T-cell (primary cell): ENCODE measurements at regions of chr6 and their contacts with region 1.

Region 1: DNA sequence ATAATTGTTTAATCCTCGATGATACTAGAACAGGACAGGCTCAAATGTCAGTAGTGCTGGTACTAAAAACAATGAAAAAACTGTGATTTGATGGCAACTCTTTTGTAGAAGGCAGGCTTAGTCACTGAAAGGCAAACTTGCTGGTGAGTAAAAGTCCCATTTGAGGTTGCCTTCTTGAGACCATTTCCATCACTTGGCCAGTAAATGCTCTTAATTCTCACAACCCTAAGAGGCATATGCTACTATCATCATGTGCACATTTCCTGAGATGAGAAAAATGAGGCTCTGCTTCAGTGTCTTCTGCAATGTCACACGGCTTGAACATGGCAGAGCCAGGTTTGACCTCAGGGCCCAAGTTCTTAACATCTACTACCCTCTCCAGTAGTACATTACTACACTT is 9.9 kb downstream of the AKIRIN2 start:
- DNase-seq: no peak
- ATAC-seq: no peak
- H3K4me3 ChIP-seq: no peak overlapping the region
- H3K4me3 Mint-ChIP-seq: no peak overlapping the region
- H3K27ac ChIP-seq: no peak overlapping the region
- H3K27ac Mint-ChIP-seq: peak overlapping the region in 1 of 2 donors; percentile 52
- H3K4me1 ChIP-seq: peaks cover 13 to 43% of the 10 kb centered on the region in 2 experiments
- H3K4me1 Mint-ChIP-seq: peaks cover 63 to 86% (median 84%) of the 10 kb centered on the region in 3 donors
- H3K27me3 ChIP-seq: no peaks in the 10 kb centered on the region
- H3K27me3 Mint-ChIP-seq: no peaks in the 10 kb centered on the region

Region 2: GRCh38 chr6:87472525-87473418 is 219.3 kb before region 1 on chr6 and contains the start of gene SLC35A1:
- CTCF ChIA-PET with region 1: no interaction called
- POLR2A ChIA-PET with region 1: interaction called in 1 of 2 experiments, 18 read pairs
- DNase-seq: peak; percentile 63 to 89 (median 78)
- ATAC-seq: peak; percentile 93 to 96 (median 94)
- H3K4me3 ChIP-seq: peak within 1 kb of the TSS; percentile 93 to 98
- H3K4me3 Mint-ChIP-seq: peak within 1 kb of the TSS; percentile 96 to 98 (median 96)
- H3K27ac ChIP-seq: peak within 1 kb of the TSS; percentile 93
- H3K27ac Mint-ChIP-seq: peak within 1 kb of the TSS; percentile 99 to 100
- H3K4me1 ChIP-seq: peaks cover 6 to 12% of the 10 kb centered on the region in 2 experiments
- H3K4me1 Mint-ChIP-seq: peaks cover 14 to 33% (median 29%) of the 10 kb centered on the region in 3 donors
- H3K27me3 ChIP-seq: no peaks in the 10 kb centered on the region
- H3K27me3 Mint-ChIP-seq: peaks cover 2 to 8% of the 10 kb centered on the region in 2 donors
- total RNA-seq, gene SLC35A1: 11.2 to 18.9 (median 18.7) TPM

Region 3: DNA sequence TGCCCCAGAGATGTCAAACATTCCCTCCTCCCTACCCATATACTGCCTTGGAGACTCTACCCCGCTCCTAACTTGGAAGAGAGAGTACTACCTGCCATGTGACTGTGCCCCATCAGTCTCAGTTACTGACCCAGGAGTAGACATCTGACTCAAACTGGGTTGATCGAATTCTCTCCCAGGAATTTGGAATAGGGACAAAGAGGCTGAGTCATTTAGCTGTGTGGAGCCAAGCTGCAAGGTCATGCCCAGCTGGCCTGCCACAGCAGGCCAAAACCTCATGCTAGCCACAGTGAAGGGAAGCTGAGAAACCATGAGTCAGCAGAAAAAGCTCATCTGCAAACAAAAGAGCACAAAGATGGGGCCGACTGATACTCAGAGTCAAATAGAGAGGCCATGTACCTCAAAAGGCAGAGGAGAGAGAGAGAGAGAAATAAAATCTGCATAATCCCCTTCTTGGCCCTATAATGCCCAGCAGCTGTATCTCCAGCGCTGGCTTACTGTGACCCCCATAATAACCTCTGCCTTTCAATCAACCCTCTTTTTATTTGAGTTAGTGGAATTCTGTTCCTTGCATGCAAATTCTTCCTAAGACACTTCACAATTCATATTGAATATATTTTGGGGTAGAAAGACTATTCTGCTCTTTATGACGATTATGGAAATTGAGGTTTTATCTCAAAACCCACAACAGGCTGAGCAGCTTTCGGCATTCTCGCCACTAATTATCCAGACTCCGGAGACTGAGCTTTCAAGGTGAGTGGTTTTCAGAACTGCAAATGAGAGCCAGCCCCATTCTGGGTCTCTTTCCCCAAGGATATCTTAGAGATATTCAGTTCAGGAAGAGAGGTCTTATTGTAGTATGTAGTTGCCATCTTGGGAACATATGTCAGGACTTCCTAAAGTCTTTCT is 31.3 kb after region 1 on chr6:
- CTCF ChIA-PET with region 1: no interaction called
- POLR2A ChIA-PET with region 1: no interaction called
- DNase-seq: peak in 1 of 35 experiments; percentile 11
- ATAC-seq: no peak
- H3K4me3 ChIP-seq: no peak overlapping the region
- H3K4me3 Mint-ChIP-seq: no peak overlapping the region
- H3K27ac ChIP-seq: no peak overlapping the region
- H3K27ac Mint-ChIP-seq: peak overlapping the region in 1 of 2 donors; percentile 31
- H3K4me1 ChIP-seq: peaks cover 0 to 29% of the 10 kb centered on the region in 2 experiments
- H3K4me1 Mint-ChIP-seq: peaks cover 0 to 40% (median 21%) of the 10 kb centered on the region in 3 donors
- H3K27me3 ChIP-seq: no peaks in the 10 kb centered on the region
- H3K27me3 Mint-ChIP-seq: no peaks in the 10 kb centered on the region